A549 (cell line): ENCODE measurements at regions of chr1 and their contacts with region 1.

Region 1: DNA sequence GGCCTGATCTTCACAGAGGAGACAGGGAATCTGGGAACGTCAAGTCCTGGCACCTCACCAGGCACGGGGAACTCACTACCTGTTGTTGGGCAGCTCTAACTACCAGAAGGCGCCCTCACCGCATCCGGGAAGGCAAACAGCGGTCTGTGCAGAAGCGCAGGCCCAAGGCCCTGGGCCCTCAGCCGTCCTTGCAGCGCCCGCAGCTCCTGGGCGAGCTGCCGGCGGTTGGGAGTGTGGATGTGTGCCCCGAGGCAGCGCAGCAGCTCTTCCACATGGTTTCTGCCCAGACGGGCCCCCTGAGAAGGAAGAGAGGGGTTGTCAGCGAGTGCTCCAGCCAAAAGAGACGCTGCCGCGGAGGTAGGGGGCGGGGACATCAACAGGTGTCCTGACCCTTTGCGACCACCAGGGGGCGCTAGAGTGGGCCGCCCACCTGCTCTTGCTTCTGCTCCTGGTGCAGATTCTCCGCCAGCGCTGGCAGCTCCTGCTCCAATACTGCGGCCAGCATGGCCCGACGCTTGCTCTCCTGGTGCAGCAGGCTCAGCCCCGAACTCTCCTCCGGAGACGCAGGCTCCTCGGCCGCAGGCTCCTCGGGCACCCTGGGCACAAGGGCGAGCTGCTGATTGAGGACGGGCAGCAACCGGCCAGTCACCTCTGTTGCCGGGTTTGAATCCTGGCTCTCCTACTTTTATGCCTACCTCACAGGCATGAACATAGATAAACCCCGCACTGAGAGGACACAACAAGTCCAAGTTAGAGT is 9.3 kb downstream of the MAP3K6 start:
- DNase-seq: peak; percentile 49 to 78
- ATAC-seq: peak; percentile 75 to 88; a peak in 5 of 6 replicates
- H3K4me3 ChIP-seq: no peak overlapping the region
- H3K27ac ChIP-seq: no peak overlapping the region
- H3K4me1 ChIP-seq: no peaks in the 10 kb centered on the region
- CTCF ChIP-seq: peak; percentile 79
- EP300 ChIP-seq: no peak
- POLR2A ChIP-seq: no peak
- RAD21 ChIP-seq: peak; percentile 31 to 46; a peak in 2 of 5 replicates

Region 2: DNA sequence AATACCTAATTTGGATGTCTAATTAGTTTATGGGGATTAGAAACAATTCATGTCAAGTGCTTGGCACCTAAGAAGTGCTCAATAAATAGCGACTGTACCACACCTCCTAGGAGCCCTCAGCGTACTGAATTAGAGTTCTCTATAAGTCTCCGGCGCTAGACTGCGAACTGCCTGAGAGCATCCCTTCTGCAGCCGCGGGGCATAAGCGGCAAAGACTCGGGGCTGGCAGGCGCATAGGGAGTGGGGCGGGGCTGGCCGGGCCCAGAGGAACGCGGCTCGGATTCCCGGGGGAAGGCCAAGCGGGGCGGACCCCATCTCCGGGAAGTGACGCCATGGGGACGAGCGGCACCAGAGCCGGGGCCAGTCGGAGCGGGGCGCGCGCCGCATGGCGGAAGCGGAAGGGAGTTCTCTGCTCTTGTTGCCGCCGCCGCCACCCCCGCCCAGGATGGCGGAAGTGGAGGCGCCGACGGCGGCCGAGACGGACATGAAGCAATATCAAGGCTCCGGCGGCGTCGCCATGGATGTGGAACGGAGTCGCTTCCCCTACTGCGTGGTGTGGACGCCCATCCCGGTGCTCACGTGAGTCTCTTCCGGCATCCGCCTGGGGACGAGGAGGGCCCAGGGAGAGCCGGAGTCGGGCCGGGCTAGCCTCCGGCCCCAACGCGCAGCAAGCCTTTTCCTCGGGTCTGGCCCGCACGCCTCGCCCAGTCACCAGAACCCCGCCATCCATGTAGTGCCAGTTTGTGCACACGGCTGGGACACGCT is 35.5 kb before region 1 on chr1 and contains the start of gene TMEM222:
- CTCF ChIA-PET with region 1: interaction called, 16 read pairs
- POLR2A ChIA-PET with region 1: no interaction called
- DNase-seq: peak; percentile 95
- ATAC-seq: peak; percentile 98 to 99
- H3K4me3 ChIP-seq: peak within 1 kb of the TSS; percentile 99
- H3K27ac ChIP-seq: peak within 1 kb of the TSS; percentile 97 to 98
- H3K4me1 ChIP-seq: peaks cover 8% of the 10 kb centered on the region; the same call in 2 of the 3 replicates
- CTCF ChIP-seq: no peak
- EP300 ChIP-seq: no peak
- POLR2A ChIP-seq: peak; percentile 58
- RAD21 ChIP-seq: no peak; a peak in 1 of 5 replicates
- polyA plus RNA-seq, gene TMEM222: 27.1 and 28.4 TPM in 2 replicates

Region 3: DNA sequence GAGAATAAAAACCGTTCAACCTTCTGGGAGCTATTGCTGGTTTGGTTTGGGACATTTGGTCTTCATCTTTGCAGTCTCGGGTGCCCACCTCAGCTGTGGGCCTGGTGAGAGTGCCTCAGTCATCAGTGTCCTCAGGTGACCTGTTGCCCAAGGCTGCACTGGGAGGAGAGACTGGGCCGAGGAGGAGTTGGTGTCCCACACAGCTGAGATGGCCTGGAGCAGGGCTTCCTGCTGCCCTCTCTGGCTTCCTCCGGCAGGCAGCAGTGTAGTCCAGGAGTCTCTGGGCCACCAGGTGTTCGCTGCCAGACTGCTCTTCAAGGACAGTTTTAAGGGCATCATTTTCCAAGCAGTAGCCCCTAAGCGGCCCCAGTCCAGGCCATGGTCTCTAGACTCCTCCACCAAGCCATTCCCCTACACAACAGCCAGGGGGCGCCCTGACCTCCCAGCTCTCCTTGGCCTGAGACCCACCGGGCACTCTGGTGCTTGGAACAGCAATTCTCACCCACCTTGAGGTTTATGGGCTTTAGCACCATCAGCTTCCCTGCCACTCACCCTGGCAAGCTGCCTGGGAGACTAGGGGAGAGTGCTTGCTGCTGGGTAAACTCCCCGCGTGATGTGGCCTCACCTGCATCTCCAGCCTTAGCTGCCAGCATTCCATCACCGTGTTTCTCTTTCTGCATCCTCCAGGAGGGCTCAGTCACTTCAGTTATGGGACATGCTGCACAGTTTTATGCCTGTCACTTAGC is 24.8 kb before region 1 on chr1:
- CTCF ChIA-PET with region 1: interaction called, 134 read pairs
- POLR2A ChIA-PET with region 1: no interaction called
- DNase-seq: peak in 1 of 2 experiments; percentile 69
- ATAC-seq: peak; percentile 66 to 91; a peak in 5 of 6 replicates
- H3K4me3 ChIP-seq: no peak overlapping the region
- H3K27ac ChIP-seq: no peak overlapping the region
- H3K4me1 ChIP-seq: no peaks in the 10 kb centered on the region
- CTCF ChIP-seq: peak; percentile 50
- EP300 ChIP-seq: no peak
- POLR2A ChIP-seq: no peak
- RAD21 ChIP-seq: peak; percentile 24 to 31; a peak in 4 of 5 replicates

Region 4: DNA sequence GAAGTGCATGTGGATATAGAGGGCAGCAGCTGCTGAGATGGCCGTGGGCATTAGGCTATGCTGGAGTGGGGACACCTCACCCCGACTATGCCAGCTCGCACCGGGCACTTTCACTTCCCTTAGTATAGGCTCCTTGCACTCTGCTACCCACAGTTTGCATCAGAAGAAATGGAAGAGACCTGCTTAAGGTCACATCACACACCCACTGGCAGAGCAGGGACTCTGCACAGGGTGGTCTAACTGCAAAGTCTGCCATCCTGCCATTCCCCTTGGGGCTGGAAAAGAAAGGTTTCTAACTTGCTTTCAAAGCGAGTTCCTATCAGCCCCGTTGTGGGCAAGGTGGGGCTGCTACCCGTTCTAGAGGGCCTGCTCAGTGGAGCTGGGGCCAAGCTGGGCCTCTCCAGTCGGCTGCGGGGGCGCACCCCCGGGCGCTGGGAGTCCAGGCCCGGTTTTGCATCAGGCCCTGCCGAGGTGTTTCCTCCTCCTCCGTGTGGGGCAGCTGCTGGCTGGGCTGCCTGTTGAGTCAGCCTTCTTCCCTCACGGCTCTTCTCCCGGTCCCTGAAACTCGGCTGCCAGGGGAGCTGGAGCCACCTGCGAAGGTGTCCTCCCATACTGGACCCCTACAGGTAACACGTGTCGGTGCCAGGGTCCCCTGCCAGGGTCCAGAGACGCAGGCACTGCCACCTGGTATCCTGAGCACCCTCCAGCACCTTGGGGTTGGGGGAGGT is 15.8 kb before region 1 on chr1 and contains the start of gene SYTL1:
- CTCF ChIA-PET with region 1: interaction called, 134 read pairs
- POLR2A ChIA-PET with region 1: no interaction called
- DNase-seq: peak; percentile 38 to 56
- ATAC-seq: peak; percentile 81 to 84
- H3K4me3 ChIP-seq: peak within 1 kb of the TSS; percentile 19; the same call in 2 of the 3 replicates
- H3K27ac ChIP-seq: peak within 1 kb of the TSS; percentile 57 to 80
- H3K4me1 ChIP-seq: peaks cover 18% of the 10 kb centered on the region
- CTCF ChIP-seq: no peak
- EP300 ChIP-seq: no peak
- POLR2A ChIP-seq: no peak
- RAD21 ChIP-seq: no peak
- polyA plus RNA-seq, gene SYTL1: 0.50 and 0.80 TPM in 2 replicates

Region 5: DNA sequence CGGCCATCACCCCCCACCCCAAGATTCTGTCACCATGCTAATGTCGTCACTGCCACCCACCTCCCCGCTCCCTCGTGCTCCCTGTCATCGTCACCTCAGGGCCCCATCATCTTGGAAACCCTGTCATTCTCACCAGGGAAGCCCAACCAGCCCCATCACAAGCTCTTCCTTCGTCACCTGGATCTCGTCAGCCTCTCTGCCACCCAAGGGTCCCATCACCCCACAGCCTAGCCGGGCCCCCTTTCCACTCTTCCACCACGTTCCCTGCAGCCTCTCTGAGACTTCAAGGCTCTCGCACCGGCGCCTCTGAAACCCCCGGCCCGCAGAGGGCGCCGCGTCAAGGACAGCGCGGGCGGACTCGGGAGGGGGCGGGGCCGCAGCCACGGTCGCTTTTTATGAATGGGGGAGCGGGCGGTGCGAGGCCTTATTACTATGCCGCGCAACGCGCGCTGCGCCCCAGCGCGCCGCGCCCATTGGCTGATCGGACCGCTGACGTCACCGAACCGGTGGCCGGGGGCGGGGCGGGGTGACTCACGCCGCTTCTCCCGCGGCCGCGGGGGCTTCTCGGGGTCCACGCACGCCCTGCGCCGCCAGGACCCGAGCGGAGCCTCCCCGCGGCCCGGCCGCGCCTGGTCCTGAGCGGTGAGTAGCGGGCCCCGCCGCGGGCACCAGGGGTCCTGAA is 34.8 kb after region 1 on chr1 and contains the start of gene GPR3:
- CTCF ChIA-PET with region 1: interaction called, 64 read pairs
- POLR2A ChIA-PET with region 1: no interaction called
- DNase-seq: peak; percentile 81 to 88
- ATAC-seq: peak; percentile 74 to 85
- H3K4me3 ChIP-seq: peak within 1 kb of the TSS; percentile 70
- H3K27ac ChIP-seq: peak within 1 kb of the TSS; percentile 74 to 89
- H3K4me1 ChIP-seq: peaks cover 17% of the 10 kb centered on the region
- CTCF ChIP-seq: peak; percentile 50
- EP300 ChIP-seq: no peak
- POLR2A ChIP-seq: no peak
- RAD21 ChIP-seq: peak; percentile 12 to 33; a peak in 2 of 5 replicates
- polyA plus RNA-seq, gene GPR3: 1.3 and 1.7 TPM in 2 replicates